BJ (cell line): ENCODE measurements at regions of chr9 and their contacts with region 1.

Region 1: GRCh38 chr9:127809512-127810377 is 7.1 kb downstream of the FPGS start:
- DNase-seq: no peak
- H3K4me3 ChIP-seq: no peak overlapping the region
- H3K27me3 ChIP-seq: no peaks in the 10 kb centered on the region
- CTCF ChIP-seq: no peak

Region 2: DNA sequence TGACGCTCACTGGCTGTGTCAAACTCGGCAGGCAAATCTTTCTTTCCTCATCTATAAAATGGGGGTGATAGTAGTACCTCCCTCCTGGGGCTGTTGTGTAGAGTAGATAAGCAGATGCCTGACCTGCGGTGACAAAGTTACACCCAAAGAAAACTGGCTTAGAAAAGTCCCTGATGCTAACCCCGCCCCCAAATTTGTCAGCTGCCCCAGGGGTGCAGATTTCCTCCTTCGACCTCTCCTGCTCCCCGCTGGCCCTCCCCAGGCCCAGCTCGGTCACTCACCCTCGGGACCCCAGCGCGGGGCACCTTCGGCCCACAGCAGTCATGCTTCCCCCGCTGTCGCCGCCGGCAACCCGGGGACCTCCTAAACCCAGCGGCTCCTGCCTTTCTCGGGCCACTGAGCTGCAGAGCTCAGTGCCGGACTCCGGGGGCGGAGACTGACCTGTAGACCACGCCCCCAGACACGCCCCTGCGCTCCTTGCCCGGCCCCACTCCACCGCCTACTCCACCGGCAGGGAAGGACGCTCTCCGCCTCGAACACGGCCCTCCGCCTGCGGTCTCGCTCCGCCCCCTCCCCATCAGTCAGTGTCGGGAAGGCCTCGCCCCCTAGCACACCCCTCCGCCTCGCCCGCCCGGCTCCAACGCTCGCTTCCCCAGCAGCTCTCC is 38.7 kb before region 1 on chr9:
- CTCF ChIA-PET with region 1: no interaction called
- POLR2A ChIA-PET with region 1: interaction called, 27 read pairs
- DNase-seq: peak; percentile 82
- H3K4me3 ChIP-seq: peak overlapping the region; percentile 42
- H3K27me3 ChIP-seq: peaks cover 6% of the 10 kb centered on the region; the same call in 1 of the 2 replicates
- CTCF ChIP-seq: no peak

Region 3: GRCh38 chr9:127847155-127847463 is 37.4 kb after region 1 on chr9:
- CTCF ChIA-PET with region 1: interaction called, 6 read pairs
- POLR2A ChIA-PET with region 1: interaction called, 12 read pairs
- DNase-seq: no peak
- H3K4me3 ChIP-seq: no peak overlapping the region
- H3K27me3 ChIP-seq: no peaks in the 10 kb centered on the region
- CTCF ChIP-seq: no peak

Region 4: GRCh38 chr9:128127990-128128835 is 318.5 kb after region 1 on chr9:
- CTCF ChIA-PET with region 1: no interaction called
- POLR2A ChIA-PET with region 1: no interaction called
- DNase-seq: peak; percentile 38
- H3K4me3 ChIP-seq: peak overlapping the region; percentile 90
- H3K27me3 ChIP-seq: peaks cover 8% of the 10 kb centered on the region
- CTCF ChIP-seq: no peak